Endothelial cell of umbilical vein (primary cell): ENCODE measurements at regions of chr21 and their contacts with region 1.

Region 1: DNA sequence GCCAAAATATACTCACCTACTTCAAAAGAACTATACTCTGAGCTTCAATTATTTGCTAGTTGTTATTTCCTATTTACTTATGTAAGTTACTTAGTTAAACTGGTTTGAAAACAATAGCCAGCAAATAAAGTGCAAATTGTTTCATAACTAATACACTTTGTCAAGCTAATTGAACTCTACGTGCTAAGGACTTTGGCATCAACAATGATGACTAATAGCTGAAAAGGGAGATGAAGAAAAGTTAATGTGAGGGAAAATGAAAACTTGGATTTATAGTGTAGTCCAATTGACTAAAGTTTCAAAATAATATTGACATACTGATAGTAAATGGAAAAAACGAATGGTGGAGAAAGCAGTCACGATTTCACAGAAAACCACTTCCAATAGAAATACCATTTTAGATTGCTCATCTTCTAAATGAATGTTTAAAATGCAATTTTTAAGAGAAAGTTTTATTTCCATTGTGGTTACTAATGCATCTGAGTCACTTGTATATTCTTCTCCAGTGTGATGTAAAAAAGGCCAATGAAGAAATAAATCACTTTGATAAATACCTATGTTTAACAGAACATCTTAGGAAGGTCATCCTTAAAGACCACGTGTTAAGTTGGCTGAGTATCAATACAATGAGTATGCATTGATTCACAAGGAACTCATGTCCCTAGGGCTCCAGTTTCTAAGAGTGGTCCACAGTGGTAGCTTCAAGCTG is 455.2 kb downstream of the LTN1 start:
- DNase-seq: peak; percentile 82
- H3K4me3 ChIP-seq: no peak overlapping the region
- H3K27ac ChIP-seq: no peak overlapping the region
- H3K4me1 ChIP-seq: peaks cover 37% of the 10 kb centered on the region
- H3K27me3 ChIP-seq: no peaks in the 10 kb centered on the region
- CTCF ChIP-seq: no peak
- POLR2A ChIP-seq: no peak

Region 2: DNA sequence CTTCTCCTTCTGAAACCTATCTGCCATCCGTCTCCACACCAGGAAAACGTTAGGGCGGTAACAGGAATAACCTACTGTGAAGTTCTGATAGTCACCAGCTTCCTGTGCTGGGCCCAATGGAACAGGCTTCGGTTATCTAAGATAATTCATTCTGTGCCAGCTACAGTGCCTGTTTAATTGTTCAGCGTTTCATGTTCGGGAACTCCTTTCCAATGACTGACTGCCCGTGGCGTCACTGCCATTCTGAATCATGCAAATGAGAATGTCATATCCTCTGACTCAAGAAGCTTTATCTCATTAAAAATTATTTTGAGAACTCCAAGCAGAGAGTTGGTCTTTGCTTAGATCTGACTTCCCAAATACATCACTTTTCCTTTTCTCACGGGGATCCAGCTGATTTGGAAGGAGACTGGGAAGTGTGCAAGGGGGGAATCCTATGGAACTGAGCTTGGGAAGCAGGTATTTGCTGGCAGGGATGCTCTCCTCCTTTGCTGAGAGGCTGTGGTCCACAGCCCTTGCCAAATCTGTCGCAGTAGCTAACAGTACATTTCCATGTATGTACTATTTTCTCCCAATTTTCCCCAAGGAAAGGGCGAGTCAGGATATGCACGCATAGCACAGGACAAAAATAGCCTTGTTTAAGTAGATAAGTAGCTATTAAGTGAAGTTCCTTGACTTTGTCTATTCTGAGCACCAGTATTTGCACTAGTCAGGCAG is 96.5 kb after region 1 on chr21:
- CTCF ChIA-PET with region 1: interaction called, 3 read pairs
- POLR2A ChIA-PET with region 1: no interaction called
- dilution Hi-C with region 1: no loop called
- intact Hi-C with region 1: loop called (anchors 1 kb)
- DNase-seq: peak; percentile 94
- H3K4me3 ChIP-seq: peak overlapping the region in 1 of 3 experiments; percentile 1
- H3K27ac ChIP-seq: peak overlapping the region; percentile 97
- H3K4me1 ChIP-seq: peaks cover 59% of the 10 kb centered on the region
- H3K27me3 ChIP-seq: no peaks in the 10 kb centered on the region
- CTCF ChIP-seq: no peak
- POLR2A ChIP-seq: peak; percentile 12

Region 3: GRCh38 chr21:29232601-29233546 is 695.3 kb after region 1 on chr21:
- CTCF ChIA-PET with region 1: no interaction called
- POLR2A ChIA-PET with region 1: no interaction called
- dilution Hi-C with region 1: no loop called
- intact Hi-C with region 1: no loop called
- DNase-seq: peak; percentile 60
- H3K4me3 ChIP-seq: no peak overlapping the region
- H3K27ac ChIP-seq: no peak overlapping the region
- H3K4me1 ChIP-seq: peaks cover 18% of the 10 kb centered on the region
- H3K27me3 ChIP-seq: no peaks in the 10 kb centered on the region
- CTCF ChIP-seq: no peak
- POLR2A ChIP-seq: no peak